ENCODE measurements at regions of chr5 and their contacts with region 1.

Region 1: DNA sequence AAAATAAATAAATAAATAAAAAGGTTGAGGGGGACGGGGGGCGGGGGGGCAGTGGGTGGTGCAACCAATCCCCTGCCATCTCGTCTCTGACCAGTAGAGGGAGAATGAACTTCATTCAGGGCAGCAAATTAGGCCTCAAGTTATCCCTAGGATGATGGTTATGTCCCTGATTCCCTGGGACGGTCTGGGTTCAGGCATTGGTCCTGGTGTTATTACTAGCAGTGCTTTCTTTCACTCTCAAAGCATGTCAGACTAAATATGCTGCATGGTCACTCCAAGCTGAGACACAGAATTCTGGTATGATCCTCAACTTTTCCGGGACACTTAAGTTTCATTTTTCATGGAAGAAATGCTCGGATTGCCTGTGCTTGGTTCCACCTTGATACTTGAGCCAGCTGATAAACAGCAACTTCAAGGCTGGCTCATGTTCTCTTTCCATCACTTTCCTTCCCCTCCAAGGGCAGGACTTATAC is 59.4 kb downstream of the DAP start:
- DNase-seq: peak; percentile 57
- H3K4me3 Mint-ChIP-seq: no peak overlapping the region
- H3K27ac Mint-ChIP-seq: peak overlapping the region; percentile 30
- H3K4me1 Mint-ChIP-seq: peaks cover 39% of the 10 kb centered on the region
- H3K27me3 Mint-ChIP-seq: no peaks in the 10 kb centered on the region
- CTCF ChIP-seq: peak; percentile 72

Region 2: DNA sequence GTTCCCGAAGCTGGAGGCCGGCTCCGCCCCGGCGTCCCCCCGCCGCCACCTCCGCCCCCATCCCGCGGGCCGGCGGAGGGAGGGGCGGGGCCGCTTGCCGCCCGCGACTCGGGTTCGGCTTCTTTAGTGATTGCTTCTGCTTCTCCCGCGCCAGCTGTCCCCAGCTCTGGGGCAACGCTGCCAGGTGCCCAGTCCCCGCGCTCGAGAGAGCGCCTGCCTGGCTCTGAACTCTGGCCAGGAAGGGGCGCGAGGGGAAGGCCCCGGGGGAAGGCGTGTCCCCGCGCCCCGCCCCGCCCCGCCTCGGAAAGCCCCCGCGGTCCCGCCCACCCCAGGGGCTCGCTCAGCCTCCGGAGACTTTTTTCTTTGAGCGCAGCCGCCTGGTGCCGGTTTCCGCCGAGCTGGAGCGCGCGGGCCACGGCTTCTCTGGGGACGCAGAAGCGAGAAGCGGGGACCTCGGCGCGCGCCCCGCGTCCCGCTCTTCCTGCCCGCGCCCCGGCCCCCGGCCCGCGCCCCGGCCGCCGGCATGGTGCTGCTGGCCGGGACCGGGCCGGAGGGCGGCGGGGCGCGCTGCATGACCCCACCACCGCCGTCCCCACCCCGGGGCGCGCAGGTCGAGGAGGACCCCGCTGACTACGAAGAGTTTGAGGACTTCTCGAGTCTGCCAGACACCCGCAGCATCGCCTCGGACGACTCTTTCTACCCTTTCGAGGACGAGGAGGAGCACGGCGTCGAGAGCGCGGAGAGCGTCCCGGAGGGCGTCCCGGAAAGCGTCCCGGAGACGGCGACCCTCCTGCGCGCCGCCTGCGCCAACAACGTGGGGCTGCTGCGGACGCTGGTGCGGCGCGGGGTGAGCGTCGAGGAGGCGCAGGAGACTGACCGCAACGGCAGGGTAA is 137.4 kb before region 1 on chr5 and contains the start of gene ANKRD33B:
- CTCF ChIA-PET with region 1: no interaction called
- POLR2A ChIA-PET with region 1: no interaction called
- intact Hi-C with region 1: no loop called
- DNase-seq: peak; percentile 55
- H3K4me3 Mint-ChIP-seq: peak within 1 kb of the TSS; percentile 66
- H3K27ac Mint-ChIP-seq: no peak within 1 kb of the TSS
- H3K4me1 Mint-ChIP-seq: peaks cover 13% of the 10 kb centered on the region
- H3K27me3 Mint-ChIP-seq: no peaks in the 10 kb centered on the region
- CTCF ChIP-seq: no peak
- total RNA-seq, gene ANKRD33B: 3.1 TPM in 2 replicates

Region 3: DNA sequence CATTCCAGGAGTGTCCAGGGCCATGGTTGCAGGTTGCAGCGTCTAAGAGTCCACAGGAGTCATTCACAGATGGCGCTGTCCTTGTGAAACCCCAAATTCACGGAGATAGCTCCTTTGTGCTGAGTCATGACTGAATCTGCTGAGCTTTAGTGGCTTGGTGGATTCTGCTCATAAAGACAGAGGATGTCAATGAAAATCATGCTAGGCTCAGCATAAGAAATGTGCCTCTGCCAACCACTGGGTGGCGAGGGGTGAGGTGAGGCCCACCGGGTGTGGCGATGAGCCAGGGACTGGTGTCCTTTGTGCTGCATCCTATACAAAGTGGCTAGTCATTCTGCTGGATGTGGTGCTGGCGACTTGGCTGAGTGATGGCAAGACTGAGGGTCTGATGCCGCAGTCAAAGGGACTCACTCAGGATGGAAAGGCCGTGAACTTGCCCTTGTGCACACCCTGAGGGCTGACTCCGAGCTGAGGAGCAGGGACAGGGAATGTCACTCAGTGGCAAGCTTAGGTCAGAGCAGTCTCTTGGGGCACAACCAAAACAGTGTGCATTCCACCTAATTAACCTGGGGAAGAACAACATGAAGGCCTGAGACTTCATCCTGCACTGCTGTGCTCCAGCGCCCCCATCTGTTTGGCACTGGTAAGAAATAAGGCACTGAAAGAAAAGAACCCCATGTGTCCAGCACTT is 12.1 kb before region 1 on chr5:
- CTCF ChIA-PET with region 1: interaction called, 15 read pairs
- POLR2A ChIA-PET with region 1: no interaction called
- intact Hi-C with region 1: no loop called
- DNase-seq: peak; percentile 57
- H3K4me3 Mint-ChIP-seq: no peak overlapping the region
- H3K27ac Mint-ChIP-seq: no peak overlapping the region
- H3K4me1 Mint-ChIP-seq: peaks cover 5% of the 10 kb centered on the region
- H3K27me3 Mint-ChIP-seq: no peaks in the 10 kb centered on the region
- CTCF ChIP-seq: peak; percentile 27

Region 4: GRCh38 chr5:10724799-10725507 is 23.4 kb after region 1 on chr5:
- CTCF ChIA-PET with region 1: interaction called, 16 read pairs
- POLR2A ChIA-PET with region 1: interaction called, 7 read pairs
- intact Hi-C with region 1: no loop called
- DNase-seq: peak; percentile 82
- H3K4me3 Mint-ChIP-seq: peak overlapping the region; percentile 65
- H3K27ac Mint-ChIP-seq: peak overlapping the region; percentile 88
- H3K4me1 Mint-ChIP-seq: peaks cover 39% of the 10 kb centered on the region
- H3K27me3 Mint-ChIP-seq: no peaks in the 10 kb centered on the region
- CTCF ChIP-seq: peak; percentile 35

Region 5: GRCh38 chr5:10756549-10756948 is 54.9 kb after region 1 on chr5:
- CTCF ChIA-PET with region 1: no interaction called
- POLR2A ChIA-PET with region 1: no interaction called
- intact Hi-C with region 1: no loop called
- DNase-seq: no peak
- H3K4me3 Mint-ChIP-seq: no peak overlapping the region
- H3K27ac Mint-ChIP-seq: no peak overlapping the region
- H3K4me1 Mint-ChIP-seq: peaks cover 5% of the 10 kb centered on the region
- H3K27me3 Mint-ChIP-seq: no peaks in the 10 kb centered on the region
- CTCF ChIP-seq: no peak